ENCODE measurements at regions of chr2 and their contacts with region 1.

Region 1: DNA sequence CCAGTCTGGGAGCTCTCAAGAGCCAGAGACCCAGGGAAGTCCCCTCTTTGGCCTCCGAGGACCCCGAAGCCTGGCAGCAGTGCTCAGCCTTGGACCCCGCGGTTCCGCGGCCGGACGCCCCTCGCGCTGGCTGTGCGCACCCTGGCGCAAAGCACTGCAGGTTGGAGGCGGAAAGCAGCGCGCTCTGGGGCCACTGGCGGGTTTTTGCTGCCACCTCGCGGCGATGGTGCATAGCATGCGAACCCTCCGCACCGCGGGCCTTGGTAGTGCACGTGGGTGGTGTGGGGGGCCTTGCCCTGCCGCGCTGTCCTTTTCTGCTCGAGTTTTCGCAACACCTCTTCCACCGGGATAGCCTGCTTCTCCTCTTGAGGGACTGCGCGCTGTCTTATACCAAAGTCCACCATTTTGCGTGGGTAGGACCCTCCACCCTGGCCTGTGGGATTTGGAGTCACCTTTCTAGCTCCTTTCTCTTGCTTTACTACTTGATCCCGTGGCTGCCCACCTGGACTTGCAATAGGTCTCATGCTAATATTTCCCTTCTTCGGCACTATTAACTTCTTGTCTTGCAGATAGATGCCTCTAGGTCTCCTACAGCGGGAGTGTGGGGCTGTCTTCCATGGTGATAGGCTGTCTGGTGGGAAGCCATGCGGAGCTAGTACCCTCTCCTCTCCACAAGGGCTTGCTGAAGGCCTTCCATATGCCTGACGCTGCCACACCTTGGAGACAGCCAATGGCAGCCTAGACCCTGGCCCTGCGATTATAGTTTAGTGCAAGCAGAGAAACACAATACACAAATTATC is 14.3 kb downstream of the SIX3 start:
- DNase-seq: peak; percentile 77
- H3K27ac ChIP-seq: no peak overlapping the region
- CTCF ChIP-seq: peak; percentile 91

Region 2: DNA sequence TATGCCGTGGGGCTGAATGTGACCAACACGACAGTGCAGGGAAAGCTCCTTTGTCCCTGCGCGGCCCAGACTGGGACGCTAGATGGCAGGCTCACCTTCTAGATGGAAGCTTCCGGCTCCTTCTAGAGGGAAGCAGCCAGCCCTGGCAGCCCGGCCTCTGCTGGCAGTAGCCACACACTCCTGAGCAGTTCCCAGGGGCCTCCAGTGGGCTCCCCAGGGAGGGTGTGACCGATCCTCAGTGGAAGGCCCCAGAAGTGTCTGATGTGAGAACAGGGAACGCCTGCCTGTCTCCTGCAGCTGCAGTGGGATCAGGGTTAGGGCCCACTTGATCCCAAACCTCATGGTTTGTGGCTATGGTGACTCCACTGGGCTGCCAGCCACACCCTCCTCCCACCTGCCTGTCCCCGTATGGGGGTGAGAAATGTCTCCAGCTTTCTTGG is 911.5 kb before region 1 on chr2:
- CTCF ChIA-PET with region 1: interaction called, 20 read pairs
- POLR2A ChIA-PET with region 1: no interaction called
- DNase-seq: peak; percentile 81
- H3K27ac ChIP-seq: no peak overlapping the region
- CTCF ChIP-seq: peak; percentile 90

Measured in RWPE1 (cell line).